Panc1 (cell line): ENCODE measurements at regions of chr9 and their contacts with region 1.

Region 1: DNA sequence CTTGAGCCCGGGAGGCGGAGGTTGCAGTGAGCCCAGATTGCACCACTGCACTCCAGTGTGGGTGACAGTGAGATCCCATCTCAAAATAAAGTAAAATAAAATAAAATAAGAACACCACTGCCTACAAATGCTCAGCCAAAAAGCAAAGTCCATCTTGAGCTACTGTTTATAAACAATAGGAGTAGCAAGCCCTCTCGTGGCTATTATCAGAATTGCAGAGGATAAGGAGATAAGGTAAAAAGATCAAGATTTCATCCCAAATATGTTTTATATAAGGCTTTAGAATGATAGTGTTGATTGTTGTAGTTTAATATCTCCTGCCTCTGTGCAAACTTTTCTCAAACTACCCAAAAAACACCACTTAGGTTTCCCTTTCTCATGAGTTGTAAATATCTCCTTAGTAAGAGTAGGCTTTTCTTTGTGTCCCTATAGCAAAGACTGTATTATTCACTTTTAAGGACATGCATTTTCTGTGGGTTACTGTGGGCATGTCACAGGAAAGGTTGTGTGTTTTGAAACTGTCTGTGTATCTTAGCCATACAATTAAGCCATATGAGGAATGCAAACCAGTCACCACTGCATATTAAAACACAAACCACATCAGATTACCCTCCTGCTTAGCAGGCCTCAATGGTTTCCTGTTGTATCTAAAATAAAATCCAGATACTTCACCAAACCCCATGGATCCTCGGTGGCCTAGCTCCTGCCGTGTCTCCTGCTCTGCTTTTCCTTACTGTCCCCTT is 31.8 kb upstream of the CKS2 start:
- DNase-seq: peak; percentile 12
- ATAC-seq: no peak
- H3K4me3 ChIP-seq: no peak overlapping the region
- H3K27ac ChIP-seq: no peak overlapping the region
- H3K4me1 ChIP-seq: no peaks in the 10 kb centered on the region
- H3K27me3 ChIP-seq: no peaks in the 10 kb centered on the region
- CTCF ChIP-seq: peak; percentile 72

Region 2: GRCh38 chr9:89021154-89021803 is 257.9 kb before region 1 on chr9:
- CTCF ChIA-PET with region 1: no interaction called
- POLR2A ChIA-PET with region 1: no interaction called
- in situ Hi-C with region 1: no loop called
- intact Hi-C with region 1: loop called (anchors 10 kb)
- DNase-seq: no peak
- ATAC-seq: peak; percentile 74; the same call in 1 of the 2 replicates
- H3K4me3 ChIP-seq: no peak overlapping the region
- H3K27ac ChIP-seq: no peak overlapping the region
- H3K4me1 ChIP-seq: no peaks in the 10 kb centered on the region
- H3K27me3 ChIP-seq: no peaks in the 10 kb centered on the region
- CTCF ChIP-seq: no peak

Region 3: GRCh38 chr9:89179895-89180667 is 99.1 kb before region 1 on chr9:
- CTCF ChIA-PET with region 1: interaction called, 3 read pairs
- POLR2A ChIA-PET with region 1: interaction called, 3 read pairs
- in situ Hi-C with region 1: no loop called
- intact Hi-C with region 1: loop called (anchors 5 kb)
- DNase-seq: peak; percentile 63
- ATAC-seq: peak; percentile 91
- H3K4me3 ChIP-seq: peak overlapping the region; percentile 50 to 61
- H3K27ac ChIP-seq: peak overlapping the region; percentile 94
- H3K4me1 ChIP-seq: peaks cover 8% of the 10 kb centered on the region
- H3K27me3 ChIP-seq: no peaks in the 10 kb centered on the region
- CTCF ChIP-seq: no peak